ENCODE measurements at regions of chr9 and their contacts with region 1.

Region 1: GRCh38 chr9:79623799-79624721 is 52.3 kb downstream of the TLE4 start:
- DNase-seq: peak; percentile 4
- H3K4me3 Mint-ChIP-seq: peak overlapping the region; percentile 62
- H3K27ac Mint-ChIP-seq: peak overlapping the region; percentile 78
- H3K4me1 Mint-ChIP-seq: peaks cover 31% of the 10 kb centered on the region
- H3K27me3 Mint-ChIP-seq: no peaks in the 10 kb centered on the region

Region 2: DNA sequence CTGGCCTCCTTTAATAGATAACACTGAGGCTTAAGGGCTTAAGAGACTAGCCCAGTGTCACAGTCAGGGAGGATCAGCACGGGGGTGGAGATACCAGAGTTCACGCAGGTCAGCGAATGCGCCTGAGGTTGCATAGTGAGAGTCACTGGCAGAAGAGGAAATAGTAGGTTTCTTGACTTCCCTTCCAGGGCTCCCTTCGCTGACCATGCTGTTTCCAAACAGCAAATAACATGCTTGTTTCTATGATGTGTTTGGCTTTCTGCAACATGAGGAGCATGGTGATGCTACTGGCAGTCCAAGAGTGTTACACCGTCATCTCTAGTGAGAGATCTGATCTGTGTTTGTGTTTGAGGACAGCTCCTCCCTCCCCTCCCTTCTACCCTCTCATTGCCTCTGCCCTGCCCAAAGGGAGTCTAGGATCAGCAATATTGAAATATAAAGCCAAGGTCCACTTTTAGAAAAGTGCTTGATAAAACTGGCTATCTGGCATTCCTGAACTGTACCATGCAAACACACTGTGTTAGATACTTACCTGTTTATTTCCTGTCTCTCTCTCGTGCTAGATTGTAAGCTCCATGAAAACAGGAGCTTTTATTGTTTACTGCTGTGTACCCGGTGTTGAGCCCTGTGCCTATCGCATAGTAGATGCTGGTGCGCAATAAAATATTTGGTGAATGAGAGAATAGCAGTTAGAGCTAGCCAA is 40.0 kb before region 1 on chr9:
- intact Hi-C with region 1: loop called (anchors 2 kb)
- DNase-seq: no peak
- H3K4me3 Mint-ChIP-seq: no peak overlapping the region
- H3K27ac Mint-ChIP-seq: no peak overlapping the region
- H3K4me1 Mint-ChIP-seq: peaks cover 50% of the 10 kb centered on the region
- H3K27me3 Mint-ChIP-seq: no peaks in the 10 kb centered on the region

Measured in activated T-helper 1 cell treated with anti-CD3 and anti-CD28 coated beads, Interleukin-12 subunit alpha, Interleukin-12 subunit beta, Interleukin-2, Interleukin-4 antibody, amounts not matched to agents 30 ng/mL and 10 ng/mL and 1 ng/mL, durations not matched to agents 14 hours and 24 hours and 36 hours (primary cell).